GM12878 (cell line): ENCODE measurements at regions of chr16 and their contacts with region 1.

Region 1: GRCh38 chr16:69396187-69397061 is 10.6 kb upstream of the TERF2 start:
- DNase-seq: peak; percentile 45
- ATAC-seq: peak; percentile 79
- H3K4me3 ChIP-seq: no peak overlapping the region
- H3K27ac ChIP-seq: no peak overlapping the region
- H3K4me1 ChIP-seq: no peaks in the 10 kb centered on the region
- H3K27me3 ChIP-seq: no peaks in the 10 kb centered on the region
- CTCF ChIP-seq: peak; percentile 42 to 62 (median 51); a peak in 4 of 6 replicates
- EP300 ChIP-seq: no peak
- POLR2A ChIP-seq: no peak
- RAD21 ChIP-seq: peak; percentile 73

Region 2: DNA sequence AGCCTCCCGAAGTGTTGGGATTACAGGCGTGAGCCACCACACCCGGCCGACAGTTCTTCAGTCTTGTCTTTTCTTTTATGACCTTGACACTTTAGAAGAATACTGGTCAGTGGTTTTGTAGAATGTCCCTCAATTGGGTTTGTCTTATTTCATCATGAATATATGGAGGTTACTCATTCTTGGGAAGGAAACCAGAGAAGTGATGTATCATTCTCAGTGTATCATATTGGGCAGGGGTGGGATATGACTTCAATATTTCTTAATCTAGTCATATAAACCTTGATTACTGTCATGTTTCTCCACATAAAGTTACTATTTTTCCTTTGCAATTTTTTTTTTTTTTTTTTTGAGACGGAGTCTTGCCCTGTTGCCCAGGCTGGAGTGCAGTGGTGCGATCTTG is 172.5 kb before region 1 on chr16:
- CTCF ChIA-PET with region 1: no interaction called
- POLR2A ChIA-PET with region 1: no interaction called
- RAD21 ChIA-PET with region 1: no interaction called
- SMC1A ChIA-PET with region 1: no interaction called
- in situ Hi-C with region 1: no loop called
- intact Hi-C with region 1: no loop called
- DNase-seq: no peak
- ATAC-seq: no peak
- H3K4me3 ChIP-seq: no peak overlapping the region
- H3K27ac ChIP-seq: no peak overlapping the region
- H3K4me1 ChIP-seq: no peaks in the 10 kb centered on the region
- H3K27me3 ChIP-seq: no peaks in the 10 kb centered on the region
- CTCF ChIP-seq: no peak
- EP300 ChIP-seq: no peak
- POLR2A ChIP-seq: no peak
- RAD21 ChIP-seq: no peak

Region 3: GRCh38 chr16:69381231-69381630 is 15.2 kb before region 1 on chr16:
- CTCF ChIA-PET with region 1: interaction called, 20 read pairs
- POLR2A ChIA-PET with region 1: interaction called, 3 read pairs
- RAD21 ChIA-PET with region 1: interaction called, 12 read pairs
- SMC1A ChIA-PET with region 1: interaction called, 14 read pairs
- in situ Hi-C with region 1: no loop called
- intact Hi-C with region 1: no loop called
- DNase-seq: no peak
- ATAC-seq: no peak
- H3K4me3 ChIP-seq: no peak overlapping the region
- H3K27ac ChIP-seq: no peak overlapping the region
- H3K4me1 ChIP-seq: peaks cover 9% of the 10 kb centered on the region
- H3K27me3 ChIP-seq: no peaks in the 10 kb centered on the region
- CTCF ChIP-seq: no peak
- EP300 ChIP-seq: no peak
- POLR2A ChIP-seq: no peak
- RAD21 ChIP-seq: no peak

Region 4: GRCh38 chr16:69435977-69436820 is 39.8 kb after region 1 on chr16:
- CTCF ChIA-PET with region 1: interaction called, 6 read pairs
- POLR2A ChIA-PET with region 1: no interaction called
- RAD21 ChIA-PET with region 1: interaction called, 12 read pairs
- SMC1A ChIA-PET with region 1: interaction called, 6 read pairs
- in situ Hi-C with region 1: no loop called
- intact Hi-C with region 1: no loop called
- DNase-seq: no peak
- ATAC-seq: peak; percentile 34
- H3K4me3 ChIP-seq: no peak overlapping the region
- H3K27ac ChIP-seq: no peak overlapping the region
- H3K4me1 ChIP-seq: peaks cover 39% of the 10 kb centered on the region
- H3K27me3 ChIP-seq: no peaks in the 10 kb centered on the region
- CTCF ChIP-seq: no peak
- EP300 ChIP-seq: no peak
- POLR2A ChIP-seq: no peak
- RAD21 ChIP-seq: no peak

Region 5: DNA sequence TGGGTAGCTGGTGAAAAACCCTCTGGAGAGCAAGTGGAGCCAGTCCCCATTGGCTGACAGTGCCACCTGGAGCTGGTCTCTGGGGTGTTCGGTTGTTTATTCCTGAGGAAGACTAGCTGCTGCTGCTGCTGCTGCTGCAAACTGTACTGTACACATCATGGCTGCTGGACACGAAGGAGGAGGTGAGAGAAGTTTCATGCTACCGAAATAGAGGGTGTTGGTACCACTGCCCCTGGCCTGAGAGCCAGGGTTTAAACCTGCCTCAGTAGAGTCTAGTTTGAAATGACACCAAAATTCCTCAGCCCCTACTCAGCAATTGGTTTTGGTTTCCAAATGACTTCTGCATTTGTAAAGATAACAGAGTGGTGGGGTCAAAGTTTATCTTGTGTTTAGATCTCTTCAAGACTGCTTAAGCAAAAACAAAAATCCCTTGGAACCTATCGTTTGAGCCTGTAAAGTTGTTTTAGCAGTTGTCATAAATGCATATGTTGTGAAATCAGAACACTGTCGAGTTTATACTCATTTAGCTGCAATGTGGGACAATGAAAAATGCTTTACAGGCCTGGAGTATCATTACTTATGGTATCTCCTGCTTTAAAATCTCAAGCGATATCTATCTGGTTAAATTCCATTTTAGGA is 68.8 kb after region 1 on chr16:
- CTCF ChIA-PET with region 1: interaction called, 25 read pairs
- POLR2A ChIA-PET with region 1: no interaction called
- RAD21 ChIA-PET with region 1: interaction called, 19 read pairs
- SMC1A ChIA-PET with region 1: interaction called, 38 read pairs
- in situ Hi-C with region 1: no loop called
- intact Hi-C with region 1: loop called (anchors 1 kb)
- DNase-seq: peak; percentile 59
- ATAC-seq: peak; percentile 67
- H3K4me3 ChIP-seq: no peak overlapping the region
- H3K27ac ChIP-seq: peak overlapping the region; percentile 12
- H3K4me1 ChIP-seq: peaks cover 55% of the 10 kb centered on the region
- H3K27me3 ChIP-seq: no peaks in the 10 kb centered on the region
- CTCF ChIP-seq: peak in 1 of 3 experiments; percentile 5; a peak in 1 of 6 replicates
- EP300 ChIP-seq: peak in 1 of 2 experiments; percentile 53; a peak in 1 of 4 replicates
- POLR2A ChIP-seq: no peak
- RAD21 ChIP-seq: peak; percentile 35; the same call in 1 of the 2 replicates

Region 6: DNA sequence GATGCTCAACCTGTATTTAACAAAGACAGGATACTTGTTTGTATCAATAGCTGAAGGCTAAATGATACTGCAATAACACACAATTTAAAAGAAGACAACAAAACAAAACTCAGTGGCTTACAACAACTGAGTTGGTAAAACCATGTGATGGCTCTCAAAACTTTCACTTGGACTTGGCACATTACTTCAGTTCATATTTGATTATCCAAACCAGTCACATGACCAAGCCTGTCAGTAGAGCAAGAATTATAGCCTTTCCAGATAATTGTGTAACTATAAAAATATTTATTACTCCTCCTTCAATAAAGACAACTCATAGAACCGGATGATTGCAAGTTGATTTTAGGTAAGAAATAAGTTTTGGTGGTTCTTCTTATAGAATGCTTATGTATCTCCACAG is 273.2 kb after region 1 on chr16:
- CTCF ChIA-PET with region 1: interaction called, 15 read pairs
- POLR2A ChIA-PET with region 1: no interaction called
- RAD21 ChIA-PET with region 1: interaction called, 4 read pairs
- SMC1A ChIA-PET with region 1: interaction called, 6 read pairs
- in situ Hi-C with region 1: no loop called
- intact Hi-C with region 1: no loop called
- DNase-seq: no peak
- ATAC-seq: no peak
- H3K4me3 ChIP-seq: no peak overlapping the region
- H3K27ac ChIP-seq: no peak overlapping the region
- H3K4me1 ChIP-seq: no peaks in the 10 kb centered on the region
- H3K27me3 ChIP-seq: no peaks in the 10 kb centered on the region
- CTCF ChIP-seq: no peak
- EP300 ChIP-seq: no peak
- POLR2A ChIP-seq: no peak
- RAD21 ChIP-seq: no peak

Region 7: DNA sequence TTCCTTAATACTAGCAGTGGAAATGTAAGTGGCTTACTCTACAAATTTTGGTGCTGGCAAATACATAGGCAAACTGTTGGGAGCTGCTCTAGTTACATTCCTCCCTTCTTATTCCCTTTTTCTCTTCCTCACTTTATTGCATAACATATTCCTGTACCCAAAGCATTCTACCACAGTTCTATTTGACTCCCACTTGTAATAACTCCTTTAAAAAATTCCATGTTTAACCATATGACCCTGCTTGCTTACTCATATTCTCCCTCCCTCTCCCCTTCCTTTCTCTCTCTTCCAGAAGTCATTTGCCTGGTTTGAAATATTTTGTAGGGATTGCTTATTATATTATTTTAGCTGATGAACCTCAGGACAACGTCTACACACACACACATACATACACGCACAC is 307.2 kb after region 1 on chr16:
- CTCF ChIA-PET with region 1: interaction called, 38 read pairs
- POLR2A ChIA-PET with region 1: interaction called, 3 read pairs
- RAD21 ChIA-PET with region 1: interaction called, 12 read pairs
- SMC1A ChIA-PET with region 1: interaction called, 13 read pairs
- in situ Hi-C with region 1: no loop called
- intact Hi-C with region 1: loop called (anchors 5 kb)
- DNase-seq: no peak
- ATAC-seq: no peak
- H3K4me3 ChIP-seq: no peak overlapping the region
- H3K27ac ChIP-seq: no peak overlapping the region
- H3K4me1 ChIP-seq: no peaks in the 10 kb centered on the region
- H3K27me3 ChIP-seq: no peaks in the 10 kb centered on the region
- CTCF ChIP-seq: no peak
- EP300 ChIP-seq: no peak
- POLR2A ChIP-seq: no peak
- RAD21 ChIP-seq: no peak

Region 8: GRCh38 chr16:69754469-69755310 is 358.3 kb after region 1 on chr16 and contains the start of gene NOB1:
- CTCF ChIA-PET with region 1: interaction called, 108 read pairs
- POLR2A ChIA-PET with region 1: interaction called, 12 read pairs
- RAD21 ChIA-PET with region 1: interaction called, 51 read pairs
- SMC1A ChIA-PET with region 1: interaction called, 45 read pairs
- in situ Hi-C with region 1: loop called (anchors 5 kb)
- intact Hi-C with region 1: loop called (anchors 2 kb)
- DNase-seq: peak; percentile 92
- ATAC-seq: peak; percentile 97
- H3K4me3 ChIP-seq: peak within 1 kb of the TSS; percentile 93
- H3K27ac ChIP-seq: peak within 1 kb of the TSS; percentile 97
- H3K4me1 ChIP-seq: peaks cover 5% of the 10 kb centered on the region
- H3K27me3 ChIP-seq: no peaks in the 10 kb centered on the region
- CTCF ChIP-seq: peak; percentile 99 to 100 (median 99); a peak in 5 of 6 replicates
- EP300 ChIP-seq: no peak
- POLR2A ChIP-seq: peak; percentile 98
- RAD21 ChIP-seq: peak; percentile 72
- polyA plus RNA-seq, gene NOB1: 31.1 to 44.0 TPM